GM18951 (cell line): ENCODE measurements at regions of chr12 and their contacts with region 1.

Region 1: GRCh38 chr12:57111031-57111734 is at the start of gene STAT6:
- POLR2A ChIP-seq: peak; percentile 70

Region 2: DNA sequence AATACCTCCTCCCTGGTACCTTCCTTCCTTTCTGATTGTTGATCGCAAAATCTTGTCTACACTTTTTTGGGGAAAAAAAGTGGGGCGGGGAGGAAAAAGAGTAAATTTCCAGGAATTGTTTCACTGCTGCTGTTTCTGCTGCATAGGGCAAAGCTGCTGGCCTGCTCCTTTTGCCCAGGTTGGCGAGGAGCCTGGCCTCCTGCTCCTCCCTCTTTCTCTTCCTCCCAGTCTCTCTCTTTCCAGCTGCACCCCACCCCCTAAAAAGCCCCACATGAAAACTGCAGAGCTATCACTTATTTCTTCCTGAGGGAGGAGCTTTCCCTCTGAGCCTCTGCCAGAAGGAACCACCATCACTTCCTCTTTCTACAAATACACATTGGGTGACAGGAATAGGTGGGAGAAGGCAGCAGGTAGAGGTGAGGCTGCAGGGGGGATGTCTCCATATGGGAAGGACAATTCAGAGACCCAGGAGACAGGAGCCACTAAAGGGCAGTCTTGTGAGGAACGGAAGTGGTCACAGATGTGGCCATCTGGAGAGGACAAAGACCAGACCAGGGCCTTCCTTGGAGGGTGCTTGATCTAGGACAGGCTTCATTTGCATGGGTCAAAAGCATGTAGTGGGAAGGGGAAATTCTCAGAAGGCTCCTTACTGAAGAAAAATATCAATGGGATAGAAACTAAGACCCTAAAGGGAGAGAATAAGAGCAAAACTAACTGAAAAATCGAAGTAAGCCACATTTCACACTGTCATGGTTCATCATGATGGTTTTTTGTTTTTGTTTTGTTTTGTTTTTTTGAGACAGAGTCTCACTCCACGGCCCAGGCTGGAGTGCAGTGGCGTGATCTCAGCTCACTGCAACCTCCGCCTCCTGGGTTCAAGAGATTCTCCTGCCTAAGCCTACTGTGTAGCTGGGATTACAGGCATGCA is 119.6 kb before region 1 on chr12:
- in situ Hi-C with region 1: no loop called
- POLR2A ChIP-seq: no peak

Region 3: DNA sequence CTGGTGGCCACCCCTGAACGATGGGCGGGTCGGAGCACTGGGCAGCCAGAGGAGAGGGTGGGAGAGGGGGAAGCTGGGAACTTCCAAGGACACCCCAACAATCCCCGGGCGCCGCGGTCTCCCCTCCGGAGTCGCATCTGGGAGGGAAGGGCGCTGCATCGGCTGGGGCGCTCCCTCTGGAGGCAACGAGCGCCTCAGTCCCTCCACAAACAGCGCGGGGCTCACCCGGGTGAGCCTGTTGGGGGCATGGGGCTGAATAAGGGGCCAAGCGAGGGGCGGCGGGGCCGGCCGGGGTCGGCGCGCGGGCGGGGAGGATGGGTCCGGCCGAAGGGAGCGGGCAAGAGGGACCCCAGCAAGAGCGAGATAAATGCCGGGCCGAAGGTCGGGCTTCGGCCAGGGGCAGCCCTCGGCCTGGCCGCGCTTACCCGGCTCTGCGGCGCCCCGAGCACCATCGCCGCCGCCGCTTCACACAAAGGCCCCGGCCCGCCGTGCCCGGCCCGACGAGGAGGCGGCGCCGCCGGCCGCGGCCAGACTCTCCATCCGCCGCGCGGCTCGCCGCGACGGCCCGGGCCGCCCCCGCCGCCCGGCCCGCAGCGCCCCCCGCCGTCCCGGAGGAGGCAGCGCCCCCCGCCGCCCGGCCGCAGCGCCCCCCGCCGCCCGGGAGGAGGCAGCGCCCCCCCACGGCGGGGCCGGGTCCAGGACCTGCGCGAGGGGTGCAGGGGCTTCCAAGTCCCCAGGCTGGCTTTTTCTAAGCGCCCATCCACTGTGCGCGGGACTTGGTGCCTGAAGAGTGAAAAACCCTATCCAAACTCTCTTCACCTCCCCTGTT is 105.0 kb before region 1 on chr12 and contains the start of gene ZBTB39:
- in situ Hi-C with region 1: loop called (anchors 10 kb)
- POLR2A ChIP-seq: peak; percentile 78